HEK293 (cell line): ENCODE measurements at regions of chr6 and their contacts with region 1.

Region 1: GRCh38 chr6:32984605-32985389 is 16.4 kb downstream of the BRD2 start:
- H3K4me3 ChIP-seq: no peak overlapping the region
- H3K27ac ChIP-seq: no peak overlapping the region
- H3K4me1 ChIP-seq: peaks cover 4% of the 10 kb centered on the region; the same call in 1 of the 2 replicates
- CTCF ChIP-seq: peak; percentile 85

Region 2: GRCh38 chr6:32838114-32838958 is 146.5 kb before region 1 on chr6 and contains the start of gene TAP2:
- CTCF ChIA-PET with region 1: interaction called, 54 read pairs
- POLR2A ChIA-PET with region 1: interaction called, 9 read pairs
- H3K4me3 ChIP-seq: peak within 1 kb of the TSS; percentile 87
- H3K27ac ChIP-seq: peak within 1 kb of the TSS; percentile 67
- H3K4me1 ChIP-seq: 0 out of 2 replicates have a peak, but pooled peaks cover 3% of the 10 kb centered on the region
- CTCF ChIP-seq: peak; percentile 96

Region 3: DNA sequence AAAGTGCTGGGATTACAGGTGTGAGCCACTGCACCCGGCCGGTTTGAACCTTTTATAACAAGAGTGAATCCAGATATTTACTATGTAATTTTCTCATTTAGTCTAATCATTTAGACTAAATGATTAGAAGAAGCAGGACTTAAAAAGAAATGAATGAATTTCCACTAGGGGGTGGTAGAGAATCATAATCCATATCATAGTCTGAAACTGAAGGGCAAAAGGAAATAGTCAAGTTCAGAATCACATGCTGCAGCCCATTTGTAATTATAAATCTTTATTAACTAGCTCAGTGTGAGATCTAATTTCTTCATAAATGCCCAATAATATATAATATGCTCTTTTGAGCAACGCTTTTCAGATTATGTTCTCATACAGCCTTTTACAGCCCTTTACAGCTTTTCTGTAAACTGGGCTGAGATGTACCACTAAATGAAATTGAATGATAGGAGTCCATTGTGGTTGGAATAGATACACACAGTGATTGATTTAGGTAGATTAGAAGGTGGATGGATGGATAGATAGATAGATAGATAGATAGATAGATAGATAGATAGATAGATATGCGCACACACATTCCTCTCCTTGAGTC is 99.0 kb before region 1 on chr6:
- CTCF ChIA-PET with region 1: interaction called, 185 read pairs
- POLR2A ChIA-PET with region 1: interaction called, 12 read pairs
- H3K4me3 ChIP-seq: no peak overlapping the region
- H3K27ac ChIP-seq: no peak overlapping the region
- H3K4me1 ChIP-seq: peaks cover 4% of the 10 kb centered on the region
- CTCF ChIP-seq: peak; percentile 28

Region 4: GRCh38 chr6:32912951-32913350 is 71.8 kb before region 1 on chr6:
- CTCF ChIA-PET with region 1: interaction called, 20 read pairs
- POLR2A ChIA-PET with region 1: interaction called, 4 read pairs
- H3K4me3 ChIP-seq: no peak overlapping the region
- H3K27ac ChIP-seq: no peak overlapping the region
- H3K4me1 ChIP-seq: no peaks in the 10 kb centered on the region
- CTCF ChIP-seq: no peak

Region 5: GRCh38 chr6:32940656-32941213 is 44.1 kb before region 1 on chr6 and contains the start of gene HLA-DMB:
- CTCF ChIA-PET with region 1: interaction called, 250 read pairs
- POLR2A ChIA-PET with region 1: interaction called, 4 read pairs
- H3K4me3 ChIP-seq: peak within 1 kb of the TSS; percentile 57
- H3K27ac ChIP-seq: no peak within 1 kb of the TSS
- H3K4me1 ChIP-seq: no peaks in the 10 kb centered on the region
- CTCF ChIP-seq: no peak

Region 6: DNA sequence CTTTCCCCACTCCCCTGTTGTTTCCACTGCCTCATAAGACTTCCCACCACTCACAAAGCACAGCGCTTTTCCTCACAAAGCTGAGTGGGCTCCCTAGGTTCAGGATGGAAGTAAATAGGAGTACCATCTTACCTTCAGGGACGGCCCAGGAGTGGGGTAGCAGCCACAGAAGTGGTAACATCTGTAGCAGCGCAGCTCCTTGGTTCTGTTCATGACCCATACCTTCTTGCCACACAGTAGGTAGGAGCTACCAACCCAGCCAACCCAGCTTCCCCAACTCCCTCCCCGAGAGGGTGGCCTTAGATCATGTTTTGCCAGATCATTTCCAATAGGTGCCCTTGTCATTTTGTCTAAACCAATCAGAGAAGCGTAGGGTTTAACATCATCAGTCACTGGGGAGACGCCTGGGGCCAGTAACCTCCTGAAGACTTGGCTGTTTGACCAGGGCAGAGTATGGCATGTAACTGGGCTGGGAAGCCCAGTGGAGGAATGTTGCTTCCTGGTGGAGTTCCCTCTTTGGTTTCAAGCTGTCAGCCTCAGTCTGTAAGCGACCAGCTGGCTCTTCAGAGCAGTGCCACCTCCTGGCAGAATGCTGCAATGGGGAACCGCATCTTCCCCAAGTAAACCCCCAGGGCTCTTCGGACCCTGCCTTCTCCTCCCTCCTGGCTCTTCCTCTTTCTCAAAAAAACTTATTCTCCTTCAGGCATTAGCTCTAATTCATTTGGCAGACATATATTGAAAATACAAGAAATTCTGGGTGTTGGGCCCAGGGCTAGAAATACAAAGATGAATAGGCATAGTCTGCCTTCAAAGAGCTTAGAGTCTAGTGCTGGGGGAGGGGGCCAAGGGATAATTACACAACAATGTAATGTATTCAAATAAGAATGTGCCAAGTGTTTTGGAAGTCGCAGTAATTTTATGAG is 31.7 kb before region 1 on chr6 and contains the start of gene HLA-DMA:
- CTCF ChIA-PET with region 1: interaction called, 123 read pairs
- POLR2A ChIA-PET with region 1: interaction called, 25 read pairs
- H3K4me3 ChIP-seq: no peak within 1 kb of the TSS
- H3K27ac ChIP-seq: no peak within 1 kb of the TSS
- H3K4me1 ChIP-seq: no peaks in the 10 kb centered on the region
- CTCF ChIP-seq: 0 out of 2 replicates have a peak, but pooled peaks have one; percentile 31

Region 7: GRCh38 chr6:33014841-33015634 is 30.2 kb after region 1 on chr6:
- CTCF ChIA-PET with region 1: interaction called, 10 read pairs
- POLR2A ChIA-PET with region 1: interaction called, 3 read pairs
- H3K4me3 ChIP-seq: no peak overlapping the region
- H3K27ac ChIP-seq: no peak overlapping the region
- H3K4me1 ChIP-seq: no peaks in the 10 kb centered on the region
- CTCF ChIP-seq: peak; percentile 57